MCF 10A (cell line): ENCODE measurements at regions of chr12 and their contacts with region 1.

Region 1: GRCh38 chr12:92899388-92900001 is 29.6 kb downstream of the EEA1 start:
- DNase-seq: peak; percentile 98
- H3K4me3 Mint-ChIP-seq: peak overlapping the region; percentile 73
- H3K27ac Mint-ChIP-seq: peak overlapping the region; percentile 72
- H3K4me1 Mint-ChIP-seq: peaks cover 16% of the 10 kb centered on the region
- H3K27me3 Mint-ChIP-seq: no peaks in the 10 kb centered on the region
- CTCF ChIP-seq: no peak

Region 2: GRCh38 chr12:92845329-92845728 is 54.2 kb before region 1 on chr12:
- CTCF ChIA-PET with region 1: no interaction called
- POLR2A ChIA-PET with region 1: interaction called, 11 read pairs
- intact Hi-C with region 1: no loop called
- DNase-seq: no peak
- H3K4me3 Mint-ChIP-seq: no peak overlapping the region
- H3K27ac Mint-ChIP-seq: no peak overlapping the region
- H3K4me1 Mint-ChIP-seq: no peaks in the 10 kb centered on the region
- H3K27me3 Mint-ChIP-seq: no peaks in the 10 kb centered on the region
- CTCF ChIP-seq: no peak

Region 3: DNA sequence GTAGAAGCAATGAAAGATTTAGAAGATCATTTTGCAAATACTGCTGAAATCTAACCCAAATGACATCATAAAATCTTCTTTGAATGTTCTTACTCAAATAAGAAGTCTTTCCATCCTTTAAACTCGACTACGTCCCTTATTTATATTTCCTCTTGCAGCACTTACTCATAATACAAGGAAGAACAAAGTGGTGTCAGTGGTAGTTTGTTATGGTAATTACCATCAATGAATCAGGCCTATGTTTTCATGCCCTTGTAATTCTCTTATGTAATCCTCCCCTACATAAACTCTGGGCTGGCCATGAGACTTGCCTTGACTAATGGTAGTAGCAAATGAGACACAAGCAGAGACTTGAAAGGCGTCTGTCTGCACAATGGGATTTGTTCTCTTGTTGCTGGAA is 12.6 kb after region 1 on chr12:
- CTCF ChIA-PET with region 1: interaction called, 5 read pairs
- POLR2A ChIA-PET with region 1: interaction called, 55 read pairs
- intact Hi-C with region 1: no loop called
- DNase-seq: peak; percentile 86
- H3K4me3 Mint-ChIP-seq: no peak overlapping the region
- H3K27ac Mint-ChIP-seq: peak overlapping the region; percentile 38
- H3K4me1 Mint-ChIP-seq: peaks cover 21% of the 10 kb centered on the region
- H3K27me3 Mint-ChIP-seq: no peaks in the 10 kb centered on the region
- CTCF ChIP-seq: no peak

Region 4: GRCh38 chr12:92973601-92974000 is 74.1 kb after region 1 on chr12:
- CTCF ChIA-PET with region 1: interaction called, 7 read pairs
- POLR2A ChIA-PET with region 1: interaction called, 13 read pairs
- intact Hi-C with region 1: loop called (anchors 1 kb)
- DNase-seq: peak; percentile 97
- H3K4me3 Mint-ChIP-seq: peak overlapping the region; percentile 51
- H3K27ac Mint-ChIP-seq: peak overlapping the region; percentile 94
- H3K4me1 Mint-ChIP-seq: peaks cover 25% of the 10 kb centered on the region
- H3K27me3 Mint-ChIP-seq: no peaks in the 10 kb centered on the region
- CTCF ChIP-seq: no peak